Left colon (tissue), 2 donors: ENCODE measurements at regions of chr12 and their contacts with region 1.

Region 1: GRCh38 chr12:7219599-7220243 is 30.2 kb downstream of the PEX5 start:
- DNase-seq: peak; percentile 54 to 81
- ATAC-seq: peak; percentile 68

Region 2: DNA sequence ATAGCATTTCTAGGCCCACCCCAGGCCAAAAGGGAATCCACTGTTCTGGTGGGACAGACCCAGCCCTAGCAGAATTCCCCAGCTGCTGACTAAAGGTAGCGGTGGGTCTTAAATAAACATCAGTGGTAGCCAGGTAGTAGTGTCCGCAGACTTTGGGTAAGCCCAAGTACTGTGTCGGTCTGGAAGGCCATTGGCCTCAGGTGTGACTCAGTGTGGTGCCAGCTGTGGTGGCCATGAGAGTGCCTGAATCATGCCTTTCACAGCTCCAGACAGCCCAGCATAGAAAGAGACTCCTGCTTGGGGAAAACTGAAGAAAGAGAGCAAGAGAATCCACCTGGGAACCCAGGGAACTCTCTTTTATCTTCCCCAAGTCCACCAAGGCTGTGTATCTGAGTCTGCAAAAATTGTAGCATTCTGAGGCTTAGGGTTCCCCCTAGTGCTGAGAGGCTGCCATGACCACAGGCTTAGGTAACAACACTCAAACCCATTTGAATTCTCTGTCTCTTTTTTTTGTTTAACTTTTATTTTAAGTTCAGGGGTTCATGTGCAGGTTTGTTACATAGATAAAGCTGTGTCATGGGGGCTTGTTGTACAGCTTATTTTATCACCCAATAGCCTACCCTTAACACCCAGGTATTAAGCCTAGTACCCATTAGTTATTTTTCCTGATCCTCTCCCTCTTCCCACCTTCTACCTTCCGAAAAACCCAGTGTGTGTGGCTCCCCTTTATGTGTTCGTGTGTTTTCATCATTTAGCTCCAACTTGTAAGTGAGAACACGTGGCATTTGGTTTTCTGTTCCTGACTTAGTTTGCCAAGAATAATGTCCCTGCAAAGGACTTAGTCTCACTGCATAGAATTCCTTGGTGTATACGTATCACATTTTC is 240.9 kb after region 1 on chr12:
- intact Hi-C with region 1: loop called in 1 of 2 experiments (anchors 5 kb)
- DNase-seq: peak; percentile 32 to 33
- ATAC-seq: peak; percentile 73

Region 3: GRCh38 chr12:7645394-7646177 is 425.9 kb after region 1 on chr12:
- intact Hi-C with region 1: loop called (anchors 5 to 10 kb)
- DNase-seq: peak in 1 of 2 donors; percentile 26
- ATAC-seq: no peak